CD4-positive, alpha-beta T cell (primary cell): ENCODE measurements at regions of chr19 and their contacts with region 1.

Region 1: DNA sequence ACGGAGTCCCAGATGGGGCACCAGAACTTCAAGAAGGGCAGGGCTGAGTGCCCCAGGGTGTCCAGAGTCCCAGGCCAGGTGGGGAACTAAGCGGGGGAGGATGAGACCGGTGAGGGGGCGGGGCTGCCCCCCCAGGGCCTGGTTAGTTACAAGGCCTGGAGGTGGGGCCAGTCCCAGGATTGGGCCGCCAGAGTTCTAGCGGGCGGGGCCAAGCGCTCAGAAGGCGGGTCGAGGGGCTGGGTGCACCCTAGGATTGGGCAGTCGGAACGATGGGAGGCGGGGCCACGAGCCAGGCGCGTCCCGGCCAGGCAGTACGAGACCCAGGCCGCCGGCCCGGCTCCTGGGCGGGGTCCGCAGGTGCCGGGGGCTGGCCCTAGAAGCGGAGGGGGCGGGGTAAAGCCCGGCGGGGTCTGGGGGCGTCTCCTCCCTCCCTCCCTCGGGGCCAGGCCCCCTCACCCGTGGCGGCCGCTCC is 571 bp downstream of the ZNF653 start:
- DNase-seq: peak; percentile 90 to 99 (median 96)
- ATAC-seq: peak; percentile 92
- H3K4me3 ChIP-seq: peak overlapping the region; percentile 71
- H3K4me3 Mint-ChIP-seq: peak overlapping the region; percentile 89
- H3K27ac ChIP-seq: peak overlapping the region; percentile 52 to 96
- H3K27ac Mint-ChIP-seq: peak overlapping the region; percentile 95
- H3K4me1 ChIP-seq: peaks cover 20% of the 10 kb centered on the region
- H3K4me1 Mint-ChIP-seq: peaks cover 14% of the 10 kb centered on the region
- H3K27me3 ChIP-seq: no peaks in the 10 kb centered on the region
- H3K27me3 Mint-ChIP-seq: no peaks in the 10 kb centered on the region
- CTCF ChIP-seq: no peak

Region 2: DNA sequence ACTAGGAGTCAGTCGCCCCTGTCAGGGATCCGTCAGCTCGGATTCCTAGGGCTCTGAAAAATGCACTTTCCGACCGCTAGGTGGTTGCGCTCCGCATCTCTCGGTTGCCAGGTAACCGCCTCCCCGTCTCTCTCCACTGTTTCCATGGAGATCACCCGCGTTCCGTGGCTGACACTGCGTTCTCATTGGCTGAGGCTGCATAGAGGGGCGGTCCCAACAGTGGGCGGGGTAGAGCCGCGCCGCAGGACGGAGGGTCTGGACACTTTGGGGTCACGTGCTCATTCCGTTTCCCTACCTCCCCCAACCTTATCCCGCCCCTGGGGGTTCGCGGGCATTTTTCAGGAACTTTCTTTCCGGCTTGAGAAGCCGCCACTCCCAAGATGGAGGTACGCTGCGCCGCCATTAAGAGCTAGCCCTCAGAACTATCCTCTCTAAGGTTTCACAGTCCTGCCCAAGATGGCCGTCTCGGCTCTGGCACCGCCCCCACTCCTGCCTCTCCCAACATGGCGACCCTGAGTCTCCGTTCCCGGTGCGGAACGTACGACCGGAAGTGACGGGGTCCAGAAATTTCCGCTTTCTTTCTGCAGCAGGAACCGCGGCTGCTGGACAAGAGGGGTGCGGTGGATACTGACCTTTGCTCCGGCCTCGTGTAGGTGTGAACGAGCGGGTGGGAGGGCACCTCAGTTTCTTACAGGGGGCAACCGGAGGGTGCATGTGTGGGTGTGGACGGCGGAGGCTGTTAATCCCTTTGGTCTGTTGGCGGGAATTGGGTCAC is 69.8 kb before region 1 on chr19 and contains the starts of genes ODAD3 and PRKCSH:
- CTCF ChIA-PET with region 1: no interaction called
- POLR2A ChIA-PET with region 1: no interaction called
- intact Hi-C with region 1: loop called in 1 of 2 experiments (anchors 1 kb)
- DNase-seq: peak; percentile 95 to 99 (median 97)
- ATAC-seq: peak; percentile 94
- H3K4me3 ChIP-seq: peak within 1 kb of the TSS; percentile 90
- H3K4me3 Mint-ChIP-seq: peak within 1 kb of the TSS; percentile 96
- H3K27ac ChIP-seq: peak within 1 kb of the TSS; percentile 58 to 83
- H3K27ac Mint-ChIP-seq: peak within 1 kb of the TSS; percentile 84
- H3K4me1 ChIP-seq: peaks cover 26% of the 10 kb centered on the region
- H3K4me1 Mint-ChIP-seq: peaks cover 21% of the 10 kb centered on the region
- H3K27me3 ChIP-seq: no peaks in the 10 kb centered on the region
- H3K27me3 Mint-ChIP-seq: no peaks in the 10 kb centered on the region
- CTCF ChIP-seq: peak; percentile 87
- total RNA-seq, gene ODAD3: not detected
- total RNA-seq, gene PRKCSH: 257 to 260 TPM

Region 3: DNA sequence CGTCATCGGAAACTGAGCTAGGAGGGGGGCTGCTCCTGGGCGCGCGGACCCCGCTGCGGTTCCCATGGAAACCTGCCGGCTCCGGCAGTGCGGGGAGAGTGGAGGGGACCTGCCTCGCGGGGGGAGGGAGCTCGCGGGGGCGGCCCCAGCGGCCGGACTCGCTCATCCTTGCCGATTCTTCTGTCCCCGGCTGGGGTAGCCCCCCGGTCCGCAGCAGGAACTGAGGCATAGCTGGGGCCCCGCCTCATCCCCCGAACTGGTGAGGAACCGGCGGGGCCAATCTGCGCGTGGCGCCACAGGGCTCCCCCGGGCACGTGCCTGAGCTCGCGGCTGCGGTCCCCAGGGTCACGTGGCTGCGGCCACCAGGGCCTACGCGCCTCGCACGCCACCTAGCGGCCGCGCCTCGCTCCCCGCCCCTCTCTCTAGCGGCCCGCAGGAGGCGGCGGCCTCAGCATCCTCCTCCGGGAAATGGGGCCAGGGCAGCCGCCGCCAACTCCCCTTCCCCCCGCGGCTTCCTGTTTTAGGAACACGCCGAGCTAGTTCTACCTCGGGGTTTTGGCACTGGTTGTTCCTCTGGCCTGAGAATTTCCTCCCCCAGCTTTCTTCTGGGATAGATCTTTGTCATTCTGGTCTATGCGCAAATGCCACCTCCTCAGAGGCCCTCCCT is 22.6 kb before region 1 on chr19:
- CTCF ChIA-PET with region 1: interaction called, 4 read pairs
- POLR2A ChIA-PET with region 1: no interaction called
- intact Hi-C with region 1: loop called in 1 of 2 experiments (anchors 1 kb)
- DNase-seq: peak; percentile 58 to 95 (median 78)
- ATAC-seq: peak; percentile 73
- H3K4me3 ChIP-seq: peak overlapping the region; percentile 7
- H3K4me3 Mint-ChIP-seq: peak overlapping the region; percentile 2
- H3K27ac ChIP-seq: no peak overlapping the region
- H3K27ac Mint-ChIP-seq: no peak overlapping the region
- H3K4me1 ChIP-seq: peaks cover 36% of the 10 kb centered on the region
- H3K4me1 Mint-ChIP-seq: peaks cover 22% of the 10 kb centered on the region
- H3K27me3 ChIP-seq: peaks cover 27 to 35% of the 10 kb centered on the region in 2 experiments
- H3K27me3 Mint-ChIP-seq: peaks cover 52% of the 10 kb centered on the region
- CTCF ChIP-seq: peak; percentile 82

Region 4: GRCh38 chr19:11528551-11529341 is 23.7 kb after region 1 on chr19 and contains the start of gene ECSIT:
- CTCF ChIA-PET with region 1: no interaction called
- POLR2A ChIA-PET with region 1: interaction called, 3 read pairs
- intact Hi-C with region 1: loop called in 1 of 2 experiments (anchors 1 kb)
- DNase-seq: peak; percentile 85 to 96 (median 88)
- ATAC-seq: peak; percentile 99
- H3K4me3 ChIP-seq: peak within 1 kb of the TSS; percentile 70
- H3K4me3 Mint-ChIP-seq: peak within 1 kb of the TSS; percentile 97
- H3K27ac ChIP-seq: peak within 1 kb of the TSS; percentile 71 to 78
- H3K27ac Mint-ChIP-seq: peak within 1 kb of the TSS; percentile 93
- H3K4me1 ChIP-seq: peaks cover 19% of the 10 kb centered on the region
- H3K4me1 Mint-ChIP-seq: peaks cover 20% of the 10 kb centered on the region
- H3K27me3 ChIP-seq: no peaks in the 10 kb centered on the region
- H3K27me3 Mint-ChIP-seq: no peaks in the 10 kb centered on the region
- CTCF ChIP-seq: no peak
- total RNA-seq, gene ECSIT: 27.2 to 27.4 TPM

Region 5: GRCh38 chr19:11558881-11559828 is 54.1 kb after region 1 on chr19 and contains the start of gene ELOF1:
- CTCF ChIA-PET with region 1: no interaction called
- POLR2A ChIA-PET with region 1: no interaction called
- intact Hi-C with region 1: loop called in 1 of 2 experiments (anchors 1 kb)
- DNase-seq: peak; percentile 90 to 99 (median 96)
- ATAC-seq: peak; percentile 93
- H3K4me3 ChIP-seq: peak within 1 kb of the TSS; percentile 94
- H3K4me3 Mint-ChIP-seq: peak within 1 kb of the TSS; percentile 96
- H3K27ac ChIP-seq: peak within 1 kb of the TSS; percentile 47 to 64
- H3K27ac Mint-ChIP-seq: peak within 1 kb of the TSS; percentile 79
- H3K4me1 ChIP-seq: peaks cover 40% of the 10 kb centered on the region
- H3K4me1 Mint-ChIP-seq: peaks cover 41% of the 10 kb centered on the region
- H3K27me3 ChIP-seq: no peaks in the 10 kb centered on the region
- H3K27me3 Mint-ChIP-seq: no peaks in the 10 kb centered on the region
- CTCF ChIP-seq: no peak
- total RNA-seq, gene ELOF1: 31.8 to 33.2 TPM

Region 6: DNA sequence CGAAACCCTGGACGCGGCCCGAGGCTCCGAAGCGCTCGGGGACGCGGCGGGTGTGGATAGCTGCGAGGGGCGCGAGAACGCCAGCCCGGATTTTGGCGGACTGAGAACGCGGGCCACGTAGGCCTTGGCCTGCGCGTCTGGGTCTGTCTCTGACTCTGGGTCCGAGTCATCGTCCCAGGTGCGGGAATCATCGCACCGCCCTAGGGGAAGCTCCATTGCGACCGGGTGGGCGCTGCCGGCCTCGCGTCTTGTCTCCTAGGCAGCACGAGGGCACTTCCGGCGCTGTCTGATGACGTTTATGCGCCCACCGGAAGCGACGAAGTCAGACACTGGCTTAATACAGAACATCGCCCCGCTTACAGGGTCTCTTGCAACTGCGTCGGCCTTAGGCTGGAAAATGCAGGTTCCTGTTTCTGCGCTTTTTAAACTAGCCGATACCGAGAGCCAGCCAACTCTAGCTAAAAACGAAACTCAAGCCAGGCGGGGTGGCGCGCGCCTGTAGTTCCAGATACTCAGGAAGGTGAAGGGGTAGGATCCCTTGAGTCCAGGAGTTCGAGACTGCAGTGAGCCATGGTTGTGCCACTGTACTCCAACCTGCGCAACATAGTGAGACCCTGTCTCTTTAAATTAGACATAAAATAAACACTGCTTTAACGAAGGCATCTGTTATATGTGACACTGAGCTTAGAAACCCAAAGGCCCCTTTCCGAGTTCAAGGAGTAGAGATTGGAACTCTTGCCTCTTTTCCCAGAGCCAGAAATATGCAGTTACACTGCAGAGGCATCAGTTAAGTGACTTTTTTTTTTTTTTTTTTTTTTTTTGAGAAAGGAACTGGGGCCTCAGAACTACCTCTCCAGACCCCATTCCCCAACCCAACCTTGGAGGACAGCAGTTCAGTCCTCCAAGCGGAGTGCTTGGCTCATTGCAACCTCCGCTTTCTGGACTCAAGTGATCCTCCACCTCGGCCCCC is 1191.6 kb after region 1 on chr19 and contains the start of gene FBXW9:
- CTCF ChIA-PET with region 1: no interaction called
- POLR2A ChIA-PET with region 1: no interaction called
- intact Hi-C with region 1: loop called in 1 of 2 experiments (anchors 10 kb)
- DNase-seq: peak; percentile 93 to 99 (median 98)
- ATAC-seq: peak; percentile 89
- H3K4me3 ChIP-seq: peak within 1 kb of the TSS; percentile 98
- H3K4me3 Mint-ChIP-seq: peak within 1 kb of the TSS; percentile 92
- H3K27ac ChIP-seq: peak within 1 kb of the TSS; percentile 78 to 90
- H3K27ac Mint-ChIP-seq: peak within 1 kb of the TSS; percentile 95
- H3K4me1 ChIP-seq: peaks cover 23% of the 10 kb centered on the region
- H3K4me1 Mint-ChIP-seq: peaks cover 11% of the 10 kb centered on the region
- H3K27me3 ChIP-seq: no peaks in the 10 kb centered on the region
- H3K27me3 Mint-ChIP-seq: no peaks in the 10 kb centered on the region
- CTCF ChIP-seq: no peak
- total RNA-seq, gene FBXW9: 2.2 to 2.4 TPM